SK-N-SH (cell line): ENCODE measurements at regions of chr17 and their contacts with region 1.

Region 1: DNA sequence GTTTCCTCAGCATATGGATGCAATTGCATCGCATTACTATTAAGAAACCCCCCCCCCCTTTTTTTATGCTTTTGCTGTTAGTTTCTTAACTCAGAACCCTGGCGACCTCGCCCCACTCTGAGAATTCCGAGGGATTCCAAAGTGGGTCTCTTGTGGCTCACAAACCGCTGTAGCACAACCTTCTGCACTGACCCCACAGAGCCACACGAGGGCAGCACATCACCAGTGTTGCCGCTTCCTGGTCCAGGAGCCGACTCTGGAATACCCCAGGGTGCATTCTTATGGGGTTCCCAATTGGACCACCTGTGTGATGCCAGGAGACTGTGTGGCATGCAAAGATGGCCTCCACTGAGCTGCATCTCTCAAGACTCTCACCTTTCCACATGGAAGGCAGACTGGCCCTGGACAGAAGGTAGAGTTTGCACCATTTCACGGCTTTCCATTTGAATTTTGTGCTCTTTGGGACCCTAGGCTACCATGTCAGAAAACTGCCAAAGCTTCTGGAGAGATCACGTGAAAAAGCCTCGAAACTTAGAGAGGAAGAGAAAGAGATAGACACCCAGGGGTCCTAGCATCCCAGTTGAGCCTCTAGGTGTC is 432.7 kb upstream of the ASIC2 start:
- DNase-seq: peak; percentile 70
- H3K4me3 ChIP-seq: no peak overlapping the region
- H3K27ac ChIP-seq: no peak overlapping the region
- H3K4me1 ChIP-seq: no peaks in the 10 kb centered on the region
- H3K27me3 ChIP-seq: no peaks in the 10 kb centered on the region
- CTCF ChIP-seq: peak; percentile 74
- EP300 ChIP-seq: no peak
- RAD21 ChIP-seq: peak; percentile 82

Region 2: GRCh38 chr17:33739714-33740113 is 13.9 kb after region 1 on chr17:
- CTCF ChIA-PET with region 1: interaction called, 19 read pairs
- POLR2A ChIA-PET with region 1: no interaction called
- DNase-seq: no peak
- H3K4me3 ChIP-seq: no peak overlapping the region
- H3K27ac ChIP-seq: no peak overlapping the region
- H3K4me1 ChIP-seq: no peaks in the 10 kb centered on the region
- H3K27me3 ChIP-seq: no peaks in the 10 kb centered on the region
- CTCF ChIP-seq: no peak
- EP300 ChIP-seq: no peak
- RAD21 ChIP-seq: no peak

Region 3: DNA sequence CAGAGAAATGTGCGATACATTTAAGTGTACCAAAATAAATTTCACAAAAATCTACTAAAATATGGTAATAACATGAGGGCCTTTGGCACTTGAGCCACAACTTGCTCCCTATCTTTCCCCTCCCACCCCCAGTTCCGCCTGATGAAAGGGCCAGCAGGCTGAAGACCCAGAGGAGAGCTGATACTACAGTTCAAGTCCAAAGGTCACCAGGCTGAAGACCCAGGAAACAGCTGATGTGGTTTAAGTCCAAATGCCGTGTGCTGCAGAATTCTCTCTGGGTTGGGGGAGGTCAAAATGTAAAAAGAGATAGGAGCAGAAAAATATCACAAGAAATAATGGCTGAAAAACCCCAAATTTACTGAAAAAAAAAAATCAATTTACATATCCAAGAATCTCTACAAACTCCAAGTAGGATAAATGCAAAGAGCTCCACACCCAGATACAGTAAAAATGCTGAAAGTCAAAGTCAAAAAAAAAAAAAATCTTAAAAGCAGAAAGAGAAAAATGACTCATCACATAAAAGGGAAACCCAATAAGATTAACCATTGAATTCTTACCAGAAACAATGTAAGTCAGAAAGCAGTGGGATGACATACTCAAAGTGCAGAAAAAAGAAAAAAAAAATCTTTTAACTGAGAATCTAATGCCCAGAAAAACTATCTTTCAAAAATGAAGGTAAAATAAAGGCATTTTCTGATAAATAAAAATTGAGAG is 19.4 kb after region 1 on chr17:
- CTCF ChIA-PET with region 1: interaction called, 62 read pairs
- POLR2A ChIA-PET with region 1: no interaction called
- DNase-seq: no peak
- H3K4me3 ChIP-seq: no peak overlapping the region
- H3K27ac ChIP-seq: no peak overlapping the region
- H3K4me1 ChIP-seq: no peaks in the 10 kb centered on the region
- H3K27me3 ChIP-seq: no peaks in the 10 kb centered on the region
- CTCF ChIP-seq: no peak
- EP300 ChIP-seq: no peak
- RAD21 ChIP-seq: no peak

Region 4: DNA sequence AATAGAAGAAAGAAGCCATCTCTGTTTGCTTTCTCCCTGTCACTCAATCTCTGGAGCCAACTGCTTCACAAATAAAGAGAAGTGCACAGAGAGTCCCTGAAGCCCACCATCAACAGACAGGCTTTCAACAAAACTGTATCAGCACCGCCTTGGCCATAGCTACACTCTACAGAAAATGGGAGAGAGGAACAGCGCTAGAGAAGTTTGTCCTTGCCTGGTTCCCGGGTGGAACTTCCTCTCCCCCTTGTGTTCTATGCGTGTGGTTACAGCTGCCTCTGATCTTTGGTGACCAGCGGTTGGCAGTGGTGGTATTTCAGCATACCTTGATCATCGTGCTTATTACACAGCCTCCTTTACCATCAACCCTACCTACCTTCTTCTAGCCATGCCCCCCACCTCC is 437.9 kb after region 1 on chr17:
- CTCF ChIA-PET with region 1: interaction called, 10 read pairs
- POLR2A ChIA-PET with region 1: no interaction called
- DNase-seq: peak; percentile 60
- H3K4me3 ChIP-seq: no peak overlapping the region
- H3K27ac ChIP-seq: no peak overlapping the region
- H3K4me1 ChIP-seq: no peaks in the 10 kb centered on the region; a peak in 1 of 4 replicates
- H3K27me3 ChIP-seq: no peaks in the 10 kb centered on the region; the same call in 1 of the 2 replicates
- CTCF ChIP-seq: peak; percentile 41
- EP300 ChIP-seq: no peak
- RAD21 ChIP-seq: peak; percentile 80

Region 5: DNA sequence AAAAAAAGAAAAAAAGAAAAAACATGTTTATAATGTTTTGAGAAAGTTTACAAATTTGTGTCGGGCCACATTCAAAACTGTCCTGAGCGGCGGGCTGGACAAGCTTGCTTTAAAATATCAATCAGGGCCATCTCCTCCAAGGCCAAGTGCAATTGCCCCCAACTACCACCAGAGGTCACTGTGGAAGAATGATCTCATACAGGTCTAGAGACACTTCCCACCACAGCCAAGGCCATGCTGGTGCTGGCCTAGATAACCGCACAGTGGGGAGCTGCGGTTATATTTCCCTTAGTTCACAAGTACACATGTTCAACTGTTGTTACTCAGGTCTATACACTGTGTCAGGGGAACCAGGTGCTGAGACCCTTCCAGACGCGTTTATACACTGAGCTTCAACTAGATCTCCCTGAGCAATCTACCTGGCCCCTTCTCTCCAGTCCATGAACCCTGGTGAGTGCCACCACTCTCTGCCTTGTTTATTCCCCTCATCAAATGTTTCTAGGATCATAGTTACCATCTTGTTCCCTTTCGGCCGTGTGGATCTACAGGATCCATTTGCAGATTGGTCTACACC is 445.6 kb after region 1 on chr17:
- CTCF ChIA-PET with region 1: interaction called, 10 read pairs
- POLR2A ChIA-PET with region 1: no interaction called
- DNase-seq: peak; percentile 62
- H3K4me3 ChIP-seq: no peak overlapping the region; a peak in 1 of 4 replicates
- H3K27ac ChIP-seq: no peak overlapping the region
- H3K4me1 ChIP-seq: no peaks in the 10 kb centered on the region; a peak in 1 of 4 replicates
- H3K27me3 ChIP-seq: no peaks in the 10 kb centered on the region
- CTCF ChIP-seq: peak; percentile 87
- EP300 ChIP-seq: no peak
- RAD21 ChIP-seq: peak; percentile 56